ENCODE measurements at regions of chr1 and their contacts with region 1.

Region 1: DNA sequence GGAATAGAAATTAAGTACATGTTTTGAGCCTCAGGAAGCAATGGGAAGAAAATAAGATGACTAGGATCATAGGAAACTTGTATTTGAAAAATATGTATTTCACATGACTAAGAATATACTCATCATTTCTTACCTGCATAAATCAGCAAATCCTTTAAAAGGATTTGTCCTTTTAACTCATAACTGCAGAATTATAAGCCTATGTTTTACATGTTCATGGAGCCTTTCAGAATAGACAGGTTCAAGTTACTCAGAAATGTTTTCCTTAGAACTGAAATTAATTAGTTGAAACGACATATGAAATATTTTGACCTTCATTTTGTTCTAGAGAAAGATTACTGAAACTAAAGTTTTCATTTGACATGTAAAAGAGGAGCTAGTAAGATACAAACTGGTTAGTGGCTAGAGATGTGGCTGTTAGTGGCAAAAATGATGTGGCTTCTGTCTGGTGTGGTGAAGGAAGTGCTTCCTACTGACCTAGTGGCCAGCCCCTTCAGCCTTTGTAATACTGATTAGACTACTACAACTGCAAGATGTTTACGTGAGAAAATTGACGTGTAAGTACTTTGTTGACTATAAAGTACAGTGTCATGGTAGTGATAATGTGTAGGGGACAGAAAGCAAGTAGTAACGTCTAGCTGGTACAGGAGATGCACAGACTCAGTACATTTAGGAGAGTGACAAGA is 54.7 kb downstream of the PACC1 start:
- DNase-seq: no peak
- ATAC-seq: no peak
- H3K4me3 ChIP-seq: no peak overlapping the region
- H3K27ac ChIP-seq: no peak overlapping the region
- H3K4me1 ChIP-seq: peaks cover 0 to 13% (median 11%) of the 10 kb centered on the region in 9 donors
- H3K27me3 ChIP-seq: no peaks in the 10 kb centered on the region
- CTCF ChIP-seq: no peak

Region 2: GRCh38 chr1:212302745-212303383 is 57.1 kb before region 1 on chr1:
- intact Hi-C with region 1: no loop called
- DNase-seq: no peak
- ATAC-seq: no peak
- H3K4me3 ChIP-seq: no peak overlapping the region
- H3K27ac ChIP-seq: peak overlapping the region in 2 of 10 donors; percentile 15 to 38
- H3K4me1 ChIP-seq: peaks cover 0 to 54% (median 33%) of the 10 kb centered on the region in 9 donors
- H3K27me3 ChIP-seq: no peaks in the 10 kb centered on the region
- CTCF ChIP-seq: no peak

Region 3: GRCh38 chr1:212315907-212316306 is 44.0 kb before region 1 on chr1:
- intact Hi-C with region 1: loop called in 1 of 10 experiments (anchors 5 kb)
- DNase-seq: no peak
- ATAC-seq: peak in 6 of 8 donors; percentile 31 to 62 (median 49)
- H3K4me3 ChIP-seq: no peak overlapping the region
- H3K27ac ChIP-seq: peak overlapping the region in 3 of 10 donors; percentile 3 to 25 (median 12)
- H3K4me1 ChIP-seq: peaks cover 3 to 69% (median 34%) of the 10 kb centered on the region in 9 donors
- H3K27me3 ChIP-seq: no peaks in the 10 kb centered on the region
- CTCF ChIP-seq: peak in 5 of 9 donors; percentile 23 to 50 (median 37)

Measured in heart right ventricle (tissue), 16 donors.